ENCODE measurements at regions of chr1 and their contacts with region 1.

Region 1: DNA sequence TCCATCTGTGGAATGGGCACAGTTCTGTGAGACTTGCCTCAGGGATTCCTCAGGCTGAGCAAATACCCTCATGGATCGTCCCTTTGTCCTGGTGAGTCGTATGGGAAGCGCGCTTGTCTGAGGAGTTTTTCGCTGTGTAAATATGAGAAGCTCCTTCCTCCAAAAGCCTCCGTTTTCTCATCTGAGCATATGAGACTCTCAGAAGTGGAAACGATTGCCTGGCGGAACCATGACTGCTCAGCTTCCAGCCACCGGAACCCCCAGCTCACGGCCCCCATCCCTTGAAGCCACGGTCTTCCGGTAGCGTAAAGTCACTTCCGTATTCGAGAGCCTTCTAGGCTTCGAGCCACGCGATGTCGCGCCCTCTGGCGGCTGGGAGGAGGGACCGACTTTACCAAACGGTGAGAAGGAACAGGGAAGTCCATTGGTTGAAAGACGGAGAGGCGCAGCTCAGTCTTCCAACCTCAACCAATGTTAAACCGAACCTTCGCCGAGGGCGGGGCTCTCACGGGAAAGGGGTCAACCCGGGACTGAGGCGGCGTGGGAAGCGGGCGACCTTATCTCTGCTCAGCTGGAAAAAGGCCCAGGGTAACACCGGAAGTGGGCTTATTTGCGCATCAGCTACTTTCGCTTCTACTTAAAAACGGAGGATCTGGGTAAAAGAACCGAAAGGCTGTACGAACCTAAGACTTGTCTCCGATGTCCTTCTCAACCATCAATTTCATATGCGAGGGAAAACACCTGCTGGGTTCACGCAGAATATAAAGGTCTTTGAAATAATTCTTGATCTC is 46.2 kb downstream of the AZIN2 start:
- DNase-seq: peak; percentile 95 to 100 (median 98)
- ATAC-seq: peak; percentile 82
- H3K4me3 ChIP-seq: peak overlapping the region; percentile 66
- H3K4me3 Mint-ChIP-seq: peak overlapping the region; percentile 88
- H3K27ac ChIP-seq: peak overlapping the region; percentile 84 to 90
- H3K27ac Mint-ChIP-seq: peak overlapping the region; percentile 99
- H3K4me1 ChIP-seq: peaks cover 27% of the 10 kb centered on the region
- H3K4me1 Mint-ChIP-seq: peaks cover 57% of the 10 kb centered on the region
- H3K27me3 ChIP-seq: no peaks in the 10 kb centered on the region
- H3K27me3 Mint-ChIP-seq: no peaks in the 10 kb centered on the region
- CTCF ChIP-seq: peak; percentile 82

Region 2: GRCh38 chr1:32413507-32414185 is 713.5 kb before region 1 on chr1:
- CTCF ChIA-PET with region 1: no interaction called
- POLR2A ChIA-PET with region 1: no interaction called
- intact Hi-C with region 1: no loop called
- DNase-seq: peak; percentile 48 to 91 (median 66)
- ATAC-seq: peak; percentile 83
- H3K4me3 ChIP-seq: no peak overlapping the region
- H3K4me3 Mint-ChIP-seq: no peak overlapping the region
- H3K27ac ChIP-seq: no peak overlapping the region
- H3K27ac Mint-ChIP-seq: no peak overlapping the region
- H3K4me1 ChIP-seq: peaks cover 2% of the 10 kb centered on the region
- H3K4me1 Mint-ChIP-seq: no peaks in the 10 kb centered on the region
- H3K27me3 ChIP-seq: no peaks in the 10 kb centered on the region
- H3K27me3 Mint-ChIP-seq: peaks cover 20% of the 10 kb centered on the region
- CTCF ChIP-seq: peak; percentile 84

Region 3: DNA sequence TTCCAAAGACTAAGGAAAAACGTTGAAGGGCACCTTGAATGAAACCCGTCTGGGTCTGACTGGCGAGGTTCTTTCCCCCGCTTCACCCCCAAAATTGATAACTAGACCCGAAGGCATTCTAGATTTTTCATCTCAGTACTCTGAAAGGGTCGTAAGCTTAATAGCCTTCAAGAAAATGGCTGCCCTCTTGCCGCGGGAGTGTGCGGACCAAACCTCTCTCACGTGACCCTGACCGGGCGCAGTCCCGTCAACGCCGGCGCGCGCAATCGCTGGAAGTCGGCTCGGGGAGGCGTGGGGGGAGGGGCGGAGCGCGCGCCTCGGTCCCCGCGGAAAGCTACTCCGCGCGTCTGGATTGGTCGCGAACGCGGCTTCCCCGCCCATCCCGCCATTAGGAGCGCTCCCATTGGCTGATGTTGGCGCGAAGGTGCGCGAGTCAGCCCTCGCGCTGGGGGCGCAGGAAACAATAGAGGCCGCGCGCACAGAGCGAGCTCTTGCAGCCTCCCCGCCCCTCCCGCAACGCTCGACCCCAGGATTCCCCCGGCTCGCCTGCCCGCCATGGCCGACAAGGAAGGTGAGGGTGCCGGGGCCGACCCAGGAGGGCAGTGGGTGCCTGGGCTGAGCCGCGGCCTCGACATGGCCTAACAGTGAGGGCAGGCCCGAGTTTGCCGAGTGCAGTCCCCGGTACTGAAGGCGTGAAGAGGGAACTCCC is 476.3 kb before region 1 on chr1 and contains the start of gene RBBP4:
- CTCF ChIA-PET with region 1: no interaction called
- POLR2A ChIA-PET with region 1: interaction called, 12 read pairs
- intact Hi-C with region 1: loop called in 1 of 2 experiments (anchors 5 kb)
- DNase-seq: peak; percentile 94 to 99 (median 98)
- ATAC-seq: peak; percentile 79
- H3K4me3 ChIP-seq: peak within 1 kb of the TSS; percentile 80
- H3K4me3 Mint-ChIP-seq: peak within 1 kb of the TSS; percentile 94
- H3K27ac ChIP-seq: peak within 1 kb of the TSS; percentile 98 to 99
- H3K27ac Mint-ChIP-seq: peak within 1 kb of the TSS; percentile 95
- H3K4me1 ChIP-seq: peaks cover 58% of the 10 kb centered on the region
- H3K4me1 Mint-ChIP-seq: peaks cover 66% of the 10 kb centered on the region
- H3K27me3 ChIP-seq: no peaks in the 10 kb centered on the region
- H3K27me3 Mint-ChIP-seq: no peaks in the 10 kb centered on the region
- CTCF ChIP-seq: no peak
- total RNA-seq, gene RBBP4: 108 to 117 TPM

Region 4: DNA sequence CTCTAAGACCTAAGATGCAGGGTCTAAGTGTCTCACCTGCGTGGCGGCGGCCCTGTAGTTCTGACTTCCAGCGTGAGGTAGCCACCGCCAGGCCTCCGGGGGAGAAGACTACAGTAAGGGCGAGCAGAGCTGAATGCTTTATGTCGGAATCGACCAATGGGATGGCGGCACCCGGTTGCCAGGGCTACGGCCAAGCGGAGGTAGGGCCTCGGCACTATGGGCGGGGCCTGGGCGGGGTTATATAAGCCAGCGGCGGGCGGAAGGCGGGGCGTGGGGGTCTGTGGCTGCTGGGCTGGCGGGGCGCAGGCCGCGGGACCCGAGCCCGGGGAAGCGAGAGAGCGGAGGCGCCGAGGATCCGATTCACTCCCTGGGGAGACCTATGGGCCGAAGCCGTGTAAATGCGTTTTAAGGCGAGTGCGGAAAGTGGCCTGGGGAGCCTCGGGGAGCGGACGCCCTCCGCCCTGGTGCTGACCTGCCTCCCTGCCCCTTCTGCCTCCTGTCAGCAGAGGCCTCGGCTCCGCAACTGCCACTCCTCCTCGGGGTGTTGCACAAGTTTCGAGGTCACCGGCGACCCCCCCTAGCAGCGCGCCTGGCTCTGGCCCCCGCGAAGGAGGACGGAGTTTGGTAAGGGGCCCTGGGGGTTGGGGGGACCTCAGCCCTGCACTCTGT is 46.2 kb before region 1 on chr1 and contains the start of gene AZIN2:
- CTCF ChIA-PET with region 1: interaction called, 16 read pairs
- POLR2A ChIA-PET with region 1: interaction called, 44 read pairs
- intact Hi-C with region 1: loop called in 1 of 2 experiments (anchors 5 kb)
- DNase-seq: peak; percentile 95 to 100 (median 97)
- ATAC-seq: peak; percentile 99
- H3K4me3 ChIP-seq: peak within 1 kb of the TSS; percentile 82
- H3K4me3 Mint-ChIP-seq: peak within 1 kb of the TSS; percentile 94
- H3K27ac ChIP-seq: peak within 1 kb of the TSS in 1 of 2 donors; percentile 27
- H3K27ac Mint-ChIP-seq: peak within 1 kb of the TSS; percentile 81
- H3K4me1 ChIP-seq: peaks cover 23% of the 10 kb centered on the region
- H3K4me1 Mint-ChIP-seq: peaks cover 36% of the 10 kb centered on the region
- H3K27me3 ChIP-seq: no peaks in the 10 kb centered on the region
- H3K27me3 Mint-ChIP-seq: no peaks in the 10 kb centered on the region
- CTCF ChIP-seq: no peak
- total RNA-seq, gene AZIN2: 4.6 to 4.9 TPM

Region 5: DNA sequence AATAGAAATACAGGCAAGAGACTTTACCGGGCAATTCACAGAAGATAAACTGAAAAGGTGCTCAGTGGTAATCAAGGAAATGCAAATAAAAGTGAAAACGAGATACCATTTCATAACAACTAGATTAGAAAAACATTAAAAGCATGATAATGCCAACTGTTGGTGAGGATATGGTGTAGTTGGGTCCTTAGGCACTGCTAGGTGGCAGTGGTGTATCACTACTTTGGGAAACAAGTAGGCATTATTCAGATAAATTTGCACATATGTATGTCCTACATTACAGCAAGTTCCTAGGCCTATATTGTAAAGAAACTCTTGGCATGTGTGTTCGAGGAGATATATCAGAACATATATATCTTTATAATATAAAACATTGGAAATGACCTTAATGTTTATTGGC is 15.2 kb before region 1 on chr1:
- CTCF ChIA-PET with region 1: interaction called, 11 read pairs
- POLR2A ChIA-PET with region 1: interaction called, 9 read pairs
- intact Hi-C with region 1: no loop called
- DNase-seq: peak in 3 of 14 experiments; percentile 28 to 54 (median 54)
- ATAC-seq: peak; percentile 58
- H3K4me3 ChIP-seq: no peak overlapping the region
- H3K4me3 Mint-ChIP-seq: no peak overlapping the region
- H3K27ac ChIP-seq: no peak overlapping the region
- H3K27ac Mint-ChIP-seq: no peak overlapping the region
- H3K4me1 ChIP-seq: no peaks in the 10 kb centered on the region
- H3K4me1 Mint-ChIP-seq: no peaks in the 10 kb centered on the region
- H3K27me3 ChIP-seq: no peaks in the 10 kb centered on the region
- H3K27me3 Mint-ChIP-seq: no peaks in the 10 kb centered on the region
- CTCF ChIP-seq: peak; percentile 28

Region 6: GRCh38 chr1:33147997-33148314 is 20.8 kb after region 1 on chr1:
- CTCF ChIA-PET with region 1: interaction called, 18 read pairs
- POLR2A ChIA-PET with region 1: interaction called, 5 read pairs
- intact Hi-C with region 1: no loop called
- DNase-seq: peak in 4 of 14 experiments; percentile 21 to 53 (median 36)
- ATAC-seq: no peak
- H3K4me3 ChIP-seq: no peak overlapping the region
- H3K4me3 Mint-ChIP-seq: no peak overlapping the region
- H3K27ac ChIP-seq: no peak overlapping the region
- H3K27ac Mint-ChIP-seq: peak overlapping the region; percentile 58
- H3K4me1 ChIP-seq: no peaks in the 10 kb centered on the region
- H3K4me1 Mint-ChIP-seq: no peaks in the 10 kb centered on the region
- H3K27me3 ChIP-seq: no peaks in the 10 kb centered on the region
- H3K27me3 Mint-ChIP-seq: no peaks in the 10 kb centered on the region
- CTCF ChIP-seq: peak; percentile 22

Region 7: GRCh38 chr1:33256701-33257399 is 129.7 kb after region 1 on chr1:
- CTCF ChIA-PET with region 1: interaction called, 8 read pairs
- POLR2A ChIA-PET with region 1: interaction called, 9 read pairs
- intact Hi-C with region 1: loop called (anchors 5 kb)
- DNase-seq: peak; percentile 35 to 79 (median 52)
- ATAC-seq: peak; percentile 68
- H3K4me3 ChIP-seq: peak overlapping the region; percentile 84
- H3K4me3 Mint-ChIP-seq: peak overlapping the region; percentile 97
- H3K27ac ChIP-seq: peak overlapping the region in 1 of 2 donors; percentile 49
- H3K27ac Mint-ChIP-seq: peak overlapping the region; percentile 98
- H3K4me1 ChIP-seq: peaks cover 49% of the 10 kb centered on the region
- H3K4me1 Mint-ChIP-seq: peaks cover 41% of the 10 kb centered on the region
- H3K27me3 ChIP-seq: no peaks in the 10 kb centered on the region
- H3K27me3 Mint-ChIP-seq: no peaks in the 10 kb centered on the region
- CTCF ChIP-seq: no peak

Region 8: GRCh38 chr1:33273406-33273805 is 146.2 kb after region 1 on chr1:
- CTCF ChIA-PET with region 1: no interaction called
- POLR2A ChIA-PET with region 1: no interaction called
- intact Hi-C with region 1: no loop called
- DNase-seq: peak in 3 of 14 experiments; percentile 26 to 52 (median 34)
- ATAC-seq: peak; percentile 65
- H3K4me3 ChIP-seq: no peak overlapping the region
- H3K4me3 Mint-ChIP-seq: no peak overlapping the region
- H3K27ac ChIP-seq: peak overlapping the region in 1 of 2 donors; percentile 57
- H3K27ac Mint-ChIP-seq: peak overlapping the region; percentile 28
- H3K4me1 ChIP-seq: peaks cover 28% of the 10 kb centered on the region
- H3K4me1 Mint-ChIP-seq: peaks cover 38% of the 10 kb centered on the region
- H3K27me3 ChIP-seq: no peaks in the 10 kb centered on the region
- H3K27me3 Mint-ChIP-seq: no peaks in the 10 kb centered on the region
- CTCF ChIP-seq: no peak

Region 9: DNA sequence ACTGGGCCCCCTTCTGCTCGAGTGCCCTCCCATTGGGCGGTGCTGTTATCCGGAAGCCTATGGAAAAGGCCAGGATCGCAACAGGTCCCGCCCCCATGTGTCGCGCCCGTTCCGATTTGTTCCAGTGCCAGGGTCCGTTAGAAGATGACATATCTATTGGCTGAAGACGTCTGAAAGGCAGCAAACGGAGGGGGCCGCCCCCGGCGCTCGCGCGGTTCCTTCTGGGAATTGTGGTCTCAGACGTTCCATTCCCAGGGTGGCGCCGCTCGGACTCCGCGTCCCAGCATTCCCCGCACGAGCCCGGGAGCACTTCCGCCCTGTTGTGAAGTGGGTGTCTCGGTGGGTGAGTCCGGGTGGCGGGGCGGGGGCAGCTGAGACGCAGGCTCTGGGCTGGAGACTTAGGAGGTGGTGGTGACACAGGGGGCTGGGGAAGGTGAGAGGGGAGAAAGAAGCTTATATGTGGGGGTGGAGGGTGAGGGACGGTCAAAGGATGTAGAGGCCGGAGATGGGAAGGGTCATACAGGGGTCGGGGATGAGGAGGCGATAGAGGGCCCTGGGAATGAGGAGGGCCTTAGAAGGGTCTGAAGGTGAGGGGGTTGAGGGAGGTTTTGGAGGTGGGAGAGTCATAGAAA is 345.3 kb after region 1 on chr1 and contains the start of gene ZSCAN20:
- CTCF ChIA-PET with region 1: no interaction called
- POLR2A ChIA-PET with region 1: interaction called, 4 read pairs
- intact Hi-C with region 1: loop called in 1 of 2 experiments (anchors 5 kb)
- DNase-seq: peak; percentile 62 to 91 (median 80)
- ATAC-seq: peak; percentile 98
- H3K4me3 ChIP-seq: peak within 1 kb of the TSS; percentile 63
- H3K4me3 Mint-ChIP-seq: peak within 1 kb of the TSS; percentile 90
- H3K27ac ChIP-seq: peak within 1 kb of the TSS; percentile 31 to 39
- H3K27ac Mint-ChIP-seq: peak within 1 kb of the TSS; percentile 24
- H3K4me1 ChIP-seq: peaks cover 22% of the 10 kb centered on the region
- H3K4me1 Mint-ChIP-seq: peaks cover 38% of the 10 kb centered on the region
- H3K27me3 ChIP-seq: no peaks in the 10 kb centered on the region
- H3K27me3 Mint-ChIP-seq: no peaks in the 10 kb centered on the region
- CTCF ChIP-seq: no peak
- total RNA-seq, gene ZSCAN20: 0.27 to 0.50 TPM

Region 10: GRCh38 chr1:33641104-33641830 is 514.1 kb after region 1 on chr1:
- CTCF ChIA-PET with region 1: no interaction called
- POLR2A ChIA-PET with region 1: no interaction called
- intact Hi-C with region 1: no loop called
- DNase-seq: no peak
- ATAC-seq: no peak
- H3K4me3 ChIP-seq: no peak overlapping the region
- H3K4me3 Mint-ChIP-seq: no peak overlapping the region
- H3K27ac ChIP-seq: no peak overlapping the region
- H3K27ac Mint-ChIP-seq: no peak overlapping the region
- H3K4me1 ChIP-seq: no peaks in the 10 kb centered on the region
- H3K4me1 Mint-ChIP-seq: no peaks in the 10 kb centered on the region
- H3K27me3 ChIP-seq: peaks cover 14 to 25% of the 10 kb centered on the region in 2 experiments
- H3K27me3 Mint-ChIP-seq: peaks cover 51% of the 10 kb centered on the region
- CTCF ChIP-seq: no peak

Measured in CD4-positive, alpha-beta T cell (primary cell).